Calu3 (cell line): ENCODE measurements at regions of chr22 and their contacts with region 1.

Region 1: DNA sequence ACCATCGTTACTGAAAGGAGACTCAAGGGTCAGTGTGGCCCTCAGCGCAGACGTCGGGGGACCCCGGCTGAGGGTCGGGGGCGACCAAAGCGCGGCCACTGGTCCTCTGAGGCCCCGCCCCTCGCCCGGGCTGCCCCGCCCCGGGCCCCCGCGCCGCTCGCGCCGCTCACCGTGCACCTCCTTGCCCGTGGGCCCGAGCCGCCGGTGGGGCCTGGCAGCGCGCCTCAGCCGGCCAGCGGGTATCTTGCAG is 468 bp downstream of the ANKRD54 start:
- DNase-seq: peak; percentile 61
- H3K4me3 Mint-ChIP-seq: peak overlapping the region; percentile 76
- H3K27ac Mint-ChIP-seq: peak overlapping the region; percentile 79
- H3K4me1 Mint-ChIP-seq: peaks cover 22% of the 10 kb centered on the region
- H3K27me3 Mint-ChIP-seq: no peaks in the 10 kb centered on the region
- CTCF ChIP-seq: no peak

Region 2: DNA sequence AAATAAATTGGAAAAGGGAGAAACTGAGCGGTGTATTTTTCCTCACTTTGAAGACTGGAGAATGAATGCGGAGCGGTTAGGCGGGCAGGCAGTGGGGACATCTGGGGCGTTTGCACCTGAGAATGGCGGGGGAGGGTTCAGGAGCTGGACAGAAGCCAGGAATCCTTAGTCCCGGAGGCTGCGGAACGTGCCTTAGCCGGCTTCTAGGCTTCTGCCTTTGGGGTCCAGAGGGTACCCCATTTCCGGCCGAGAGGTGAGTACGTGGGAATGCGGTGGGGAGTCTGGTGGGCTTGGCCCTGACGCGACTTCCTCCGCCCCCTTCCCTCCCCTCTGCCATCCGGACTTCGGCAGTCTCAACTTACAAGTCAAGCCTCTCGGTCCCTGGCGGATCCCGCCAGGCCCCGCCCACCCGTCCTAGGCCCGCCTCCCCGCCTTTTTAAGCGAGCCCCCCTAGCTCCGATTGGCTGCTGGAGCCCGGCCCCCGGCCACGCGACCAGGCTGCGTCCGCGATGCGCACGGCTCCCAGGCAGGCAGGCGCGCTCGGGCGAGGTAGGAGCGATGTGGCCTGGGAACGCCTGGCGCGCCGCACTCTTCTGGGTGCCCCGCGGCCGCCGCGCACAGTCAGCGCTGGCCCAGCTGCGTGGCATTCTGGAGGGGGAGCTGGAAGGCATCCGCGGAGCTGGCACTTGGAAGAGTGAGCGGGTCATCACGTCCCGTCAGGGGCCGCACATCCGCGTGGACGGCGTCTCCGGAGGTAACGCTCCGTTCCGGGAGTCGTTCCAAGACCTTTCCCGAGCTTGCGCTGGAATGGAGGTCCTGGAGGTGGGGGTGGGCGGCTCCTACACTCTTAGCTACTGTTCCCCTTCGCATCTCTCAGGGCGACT is 36.0 kb before region 1 on chr22 and contains the start of gene GCAT:
- CTCF ChIA-PET with region 1: interaction called, 20 read pairs
- intact Hi-C with region 1: no loop called
- DNase-seq: peak; percentile 95
- H3K4me3 Mint-ChIP-seq: peak within 1 kb of the TSS; percentile 90
- H3K27ac Mint-ChIP-seq: peak within 1 kb of the TSS; percentile 64
- H3K4me1 Mint-ChIP-seq: peaks cover 16% of the 10 kb centered on the region
- H3K27me3 Mint-ChIP-seq: peaks cover 16% of the 10 kb centered on the region
- CTCF ChIP-seq: no peak
- total RNA-seq, gene GCAT: 22.7 and 29.9 TPM in 2 replicates

Region 3: DNA sequence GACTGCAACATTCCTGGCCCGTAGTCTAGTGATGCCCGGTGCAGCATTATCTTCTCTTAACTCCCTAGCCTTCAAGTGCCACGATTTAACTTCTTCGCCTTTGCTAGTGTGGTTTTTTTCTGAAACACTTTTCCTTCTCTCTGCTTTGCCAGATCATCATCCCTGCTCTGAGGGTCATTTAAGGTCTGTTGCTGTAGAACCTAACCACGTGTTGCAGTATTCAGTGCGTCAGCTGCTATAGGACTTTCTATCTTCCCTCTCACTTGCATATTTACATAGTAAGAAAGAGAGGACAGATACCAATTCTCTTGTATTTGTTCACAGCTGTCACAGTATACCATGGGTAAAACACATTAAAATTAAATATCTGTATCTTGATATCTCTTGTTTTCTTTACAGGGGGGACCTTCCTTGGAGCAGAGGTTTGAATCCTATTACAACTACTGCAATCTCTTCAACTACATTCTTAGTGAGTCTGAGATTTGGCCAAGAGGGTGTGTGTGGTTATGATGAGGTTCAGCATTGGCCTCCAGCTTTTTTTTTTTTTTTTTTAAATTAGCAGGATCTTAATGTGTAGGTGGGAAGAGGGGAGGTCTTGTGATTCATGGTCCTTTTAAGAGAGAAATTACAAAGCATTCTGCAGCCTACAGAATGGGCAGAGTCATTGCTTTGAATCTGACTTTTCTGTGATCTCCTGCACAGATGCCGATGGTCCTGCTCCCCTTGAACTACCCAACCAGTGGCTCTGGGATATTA is 19.1 kb after region 1 on chr22:
- CTCF ChIA-PET with region 1: interaction called, 10 read pairs
- intact Hi-C with region 1: no loop called
- DNase-seq: no peak
- H3K4me3 Mint-ChIP-seq: no peak overlapping the region
- H3K27ac Mint-ChIP-seq: no peak overlapping the region
- H3K4me1 Mint-ChIP-seq: no peaks in the 10 kb centered on the region
- H3K27me3 Mint-ChIP-seq: no peaks in the 10 kb centered on the region
- CTCF ChIP-seq: no peak